ENCODE measurements at regions of chr16 and their contacts with region 1.

Region 1: DNA sequence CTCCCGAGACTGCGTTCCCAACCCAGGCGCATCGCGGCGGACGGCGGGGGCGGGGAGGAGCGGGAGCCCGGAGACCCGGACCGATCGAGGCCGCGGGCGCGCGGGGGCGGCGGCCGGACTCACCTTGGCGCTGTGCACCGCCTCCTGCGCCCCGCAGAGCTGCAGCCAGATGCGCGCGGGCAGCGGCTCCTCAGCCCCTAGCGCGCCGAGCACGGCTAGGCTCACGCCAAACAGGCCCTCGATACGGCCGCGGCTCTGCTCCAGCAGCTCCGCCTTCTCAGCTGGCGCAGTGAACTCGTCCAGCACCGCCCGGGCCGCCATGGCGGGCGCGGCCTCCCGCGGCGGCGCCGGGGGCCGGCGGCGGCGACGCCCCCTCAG is 339 bp downstream of the N4BP1 start:
- DNase-seq: no peak
- ATAC-seq: peak; percentile 65
- H3K4me3 Mint-ChIP-seq: peak overlapping the region; percentile 89
- H3K27ac Mint-ChIP-seq: peak overlapping the region; percentile 78
- H3K4me1 Mint-ChIP-seq: peaks cover 30% of the 10 kb centered on the region
- H3K27me3 Mint-ChIP-seq: no peaks in the 10 kb centered on the region
- CTCF ChIP-seq: no peak

Region 2: GRCh38 chr16:48244080-48244862 is 365.4 kb before region 1 on chr16 and contains the start of gene LONP2:
- CTCF ChIA-PET with region 1: no interaction called
- POLR2A ChIA-PET with region 1: interaction called, 3 read pairs
- intact Hi-C with region 1: loop called (anchors 1 kb)
- DNase-seq: peak; percentile 86
- ATAC-seq: peak; percentile 97
- H3K4me3 Mint-ChIP-seq: peak within 1 kb of the TSS; percentile 91
- H3K27ac Mint-ChIP-seq: peak within 1 kb of the TSS; percentile 90
- H3K4me1 Mint-ChIP-seq: peaks cover 34% of the 10 kb centered on the region
- H3K27me3 Mint-ChIP-seq: no peaks in the 10 kb centered on the region
- CTCF ChIP-seq: no peak
- total RNA-seq, gene LONP2: 63.5 and 72.7 TPM in 2 replicates

Region 3: GRCh38 chr16:48365581-48366164 is 244.0 kb before region 1 on chr16:
- CTCF ChIA-PET with region 1: no interaction called
- POLR2A ChIA-PET with region 1: interaction called, 10 read pairs
- intact Hi-C with region 1: loop called (anchors 2 kb)
- DNase-seq: peak; percentile 74
- ATAC-seq: peak; percentile 94
- H3K4me3 Mint-ChIP-seq: peak overlapping the region; percentile 88
- H3K27ac Mint-ChIP-seq: peak overlapping the region; percentile 96
- H3K4me1 Mint-ChIP-seq: peaks cover 65% of the 10 kb centered on the region
- H3K27me3 Mint-ChIP-seq: no peaks in the 10 kb centered on the region
- CTCF ChIP-seq: no peak

Region 4: DNA sequence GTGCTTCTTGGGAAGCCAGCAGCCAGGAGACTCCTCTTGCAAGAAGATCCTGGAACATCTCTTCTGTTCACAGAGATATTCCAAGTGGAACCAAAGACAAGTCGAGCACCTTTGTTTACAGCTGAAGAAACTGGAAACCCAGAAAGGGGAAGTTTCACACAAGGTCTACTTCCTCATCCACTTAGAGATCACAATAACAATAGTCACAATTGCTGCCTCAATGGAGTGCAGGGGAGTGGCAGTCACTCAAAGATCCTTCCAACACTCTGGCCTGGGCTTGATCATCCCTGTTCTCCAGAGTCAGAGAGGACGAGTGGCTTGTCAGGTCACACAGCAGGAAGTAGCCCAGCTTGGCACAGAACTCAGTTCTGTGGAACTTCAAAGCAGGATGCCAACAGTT is 177.5 kb before region 1 on chr16:
- CTCF ChIA-PET with region 1: no interaction called
- POLR2A ChIA-PET with region 1: no interaction called
- intact Hi-C with region 1: loop called (anchors 5 kb)
- DNase-seq: peak; percentile 27
- ATAC-seq: peak; percentile 81
- H3K4me3 Mint-ChIP-seq: peak overlapping the region; percentile 78
- H3K27ac Mint-ChIP-seq: peak overlapping the region; percentile 99
- H3K4me1 Mint-ChIP-seq: peaks cover 78% of the 10 kb centered on the region
- H3K27me3 Mint-ChIP-seq: no peaks in the 10 kb centered on the region
- CTCF ChIP-seq: no peak

Region 5: GRCh38 chr16:48556913-48557351 is 52.7 kb before region 1 on chr16:
- CTCF ChIA-PET with region 1: interaction called, 3 read pairs
- POLR2A ChIA-PET with region 1: no interaction called
- intact Hi-C with region 1: loop called (anchors 5 kb)
- DNase-seq: no peak
- ATAC-seq: peak; percentile 69
- H3K4me3 Mint-ChIP-seq: no peak overlapping the region
- H3K27ac Mint-ChIP-seq: peak overlapping the region; percentile 15
- H3K4me1 Mint-ChIP-seq: peaks cover 40% of the 10 kb centered on the region
- H3K27me3 Mint-ChIP-seq: no peaks in the 10 kb centered on the region
- CTCF ChIP-seq: no peak

Region 6: DNA sequence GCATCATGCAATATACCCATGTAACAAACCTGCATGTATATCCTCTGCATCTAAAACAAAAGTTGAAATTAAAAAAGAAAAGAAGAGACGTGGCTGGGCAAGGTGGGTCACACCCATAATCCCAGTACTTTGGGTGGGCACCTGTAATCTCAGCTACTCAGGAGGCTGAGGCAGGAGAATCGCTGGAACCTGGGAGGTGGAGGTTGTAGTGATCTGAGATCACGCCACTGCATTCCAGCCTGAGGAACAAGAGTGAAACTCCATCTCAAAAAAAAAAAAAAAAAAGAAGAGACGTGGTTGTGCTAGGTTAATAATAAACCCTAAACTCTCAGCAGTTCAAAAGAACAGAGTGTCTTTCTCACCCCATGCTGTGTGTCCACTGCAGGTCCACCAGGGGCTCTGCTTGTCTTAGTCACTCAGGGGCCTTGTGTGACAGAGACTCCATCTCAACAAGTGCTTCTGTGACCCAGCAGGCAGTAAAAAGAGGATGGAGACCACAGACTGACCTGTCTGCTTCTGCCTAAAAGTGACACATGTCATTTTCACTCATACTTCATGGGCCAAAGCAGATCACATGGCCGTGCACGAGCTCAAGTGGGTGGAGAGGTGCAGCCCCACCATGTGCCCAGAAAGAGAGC is 22.6 kb after region 1 on chr16:
- CTCF ChIA-PET with region 1: interaction called, 6 read pairs
- POLR2A ChIA-PET with region 1: interaction called, 4 read pairs
- intact Hi-C with region 1: loop called (anchors 2 kb)
- DNase-seq: no peak
- ATAC-seq: no peak
- H3K4me3 Mint-ChIP-seq: no peak overlapping the region
- H3K27ac Mint-ChIP-seq: no peak overlapping the region
- H3K4me1 Mint-ChIP-seq: peaks cover 8% of the 10 kb centered on the region
- H3K27me3 Mint-ChIP-seq: peaks cover 12% of the 10 kb centered on the region
- CTCF ChIP-seq: no peak